ENCODE measurements at regions of chr2 and their contacts with region 1.

Region 1: DNA sequence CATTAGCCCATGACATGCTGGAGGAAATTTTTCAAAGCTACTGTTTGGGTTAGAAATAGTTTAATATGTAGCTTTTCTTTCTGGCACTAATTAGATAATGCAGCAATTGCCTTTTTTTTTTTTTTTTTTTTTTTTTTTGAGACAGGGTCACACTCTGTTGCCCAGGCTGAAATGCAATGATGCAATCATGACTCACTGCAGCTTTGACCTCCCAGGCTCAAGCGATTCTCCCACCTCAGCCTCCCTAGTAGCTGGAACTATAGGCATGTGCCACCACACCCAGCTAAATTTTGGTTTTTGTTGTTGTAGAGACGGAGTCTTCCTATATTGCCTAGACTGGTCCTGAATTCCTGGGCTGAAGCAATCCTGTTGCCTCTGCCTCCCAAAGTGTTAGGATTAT is 136.2 kb downstream of the SP100 start:
- DNase-seq: no peak
- ATAC-seq: peak; percentile 42
- H3K4me3 Mint-ChIP-seq: no peak overlapping the region
- H3K27ac Mint-ChIP-seq: peak overlapping the region; percentile 65
- H3K4me1 Mint-ChIP-seq: peaks cover 20% of the 10 kb centered on the region
- H3K27me3 Mint-ChIP-seq: no peaks in the 10 kb centered on the region
- CTCF ChIP-seq: no peak

Region 2: DNA sequence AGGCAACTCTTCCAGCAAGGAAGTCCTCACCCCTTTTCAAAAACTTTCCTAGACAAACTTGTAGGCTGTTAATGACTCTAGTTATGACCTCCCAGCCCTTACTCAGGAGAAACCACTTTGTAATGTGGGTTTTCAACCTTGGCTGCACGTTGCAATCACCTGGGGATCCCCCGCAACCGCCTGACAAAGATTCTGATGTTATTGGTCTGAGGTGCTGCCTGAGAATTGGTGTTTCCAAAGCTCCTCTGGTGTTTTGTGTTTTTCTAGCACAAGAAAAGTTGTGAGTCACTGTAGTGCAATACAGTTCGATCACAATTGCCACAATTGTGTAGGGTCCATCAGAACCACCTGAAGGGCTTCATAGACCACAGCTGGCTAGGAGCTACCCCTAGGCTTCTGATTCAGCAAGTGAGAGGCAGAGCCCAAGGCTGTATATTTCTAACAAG is 14.6 kb before region 1 on chr2:
- CTCF ChIA-PET with region 1: interaction called, 3 read pairs
- POLR2A ChIA-PET with region 1: interaction called, 10 read pairs
- intact Hi-C with region 1: loop called (anchors 2 kb)
- DNase-seq: no peak
- ATAC-seq: peak; percentile 85
- H3K4me3 Mint-ChIP-seq: peak overlapping the region; percentile 53
- H3K27ac Mint-ChIP-seq: peak overlapping the region; percentile 79
- H3K4me1 Mint-ChIP-seq: peaks cover 55% of the 10 kb centered on the region
- H3K27me3 Mint-ChIP-seq: no peaks in the 10 kb centered on the region
- CTCF ChIP-seq: no peak

Region 3: GRCh38 chr2:230564805-230565779 is 12.9 kb after region 1 on chr2:
- CTCF ChIA-PET with region 1: no interaction called
- POLR2A ChIA-PET with region 1: interaction called, 10 read pairs
- intact Hi-C with region 1: no loop called
- DNase-seq: no peak
- ATAC-seq: peak; percentile 91
- H3K4me3 Mint-ChIP-seq: peak overlapping the region; percentile 47
- H3K27ac Mint-ChIP-seq: peak overlapping the region; percentile 78
- H3K4me1 Mint-ChIP-seq: peaks cover 41% of the 10 kb centered on the region
- H3K27me3 Mint-ChIP-seq: no peaks in the 10 kb centered on the region
- CTCF ChIP-seq: no peak